A673 (cell line): ENCODE measurements at regions of chr12 and their contacts with region 1.

Region 1: GRCh38 chr12:110826592-110827200 is 20.1 kb upstream of the CCDC63 start:
- DNase-seq: peak; percentile 94
- H3K4me3 ChIP-seq: peak overlapping the region; percentile 8
- H3K27ac ChIP-seq: no peak overlapping the region
- H3K4me1 ChIP-seq: peaks cover 4% of the 10 kb centered on the region
- H3K27me3 ChIP-seq: no peaks in the 10 kb centered on the region
- CTCF ChIP-seq: peak; percentile 98

Region 2: DNA sequence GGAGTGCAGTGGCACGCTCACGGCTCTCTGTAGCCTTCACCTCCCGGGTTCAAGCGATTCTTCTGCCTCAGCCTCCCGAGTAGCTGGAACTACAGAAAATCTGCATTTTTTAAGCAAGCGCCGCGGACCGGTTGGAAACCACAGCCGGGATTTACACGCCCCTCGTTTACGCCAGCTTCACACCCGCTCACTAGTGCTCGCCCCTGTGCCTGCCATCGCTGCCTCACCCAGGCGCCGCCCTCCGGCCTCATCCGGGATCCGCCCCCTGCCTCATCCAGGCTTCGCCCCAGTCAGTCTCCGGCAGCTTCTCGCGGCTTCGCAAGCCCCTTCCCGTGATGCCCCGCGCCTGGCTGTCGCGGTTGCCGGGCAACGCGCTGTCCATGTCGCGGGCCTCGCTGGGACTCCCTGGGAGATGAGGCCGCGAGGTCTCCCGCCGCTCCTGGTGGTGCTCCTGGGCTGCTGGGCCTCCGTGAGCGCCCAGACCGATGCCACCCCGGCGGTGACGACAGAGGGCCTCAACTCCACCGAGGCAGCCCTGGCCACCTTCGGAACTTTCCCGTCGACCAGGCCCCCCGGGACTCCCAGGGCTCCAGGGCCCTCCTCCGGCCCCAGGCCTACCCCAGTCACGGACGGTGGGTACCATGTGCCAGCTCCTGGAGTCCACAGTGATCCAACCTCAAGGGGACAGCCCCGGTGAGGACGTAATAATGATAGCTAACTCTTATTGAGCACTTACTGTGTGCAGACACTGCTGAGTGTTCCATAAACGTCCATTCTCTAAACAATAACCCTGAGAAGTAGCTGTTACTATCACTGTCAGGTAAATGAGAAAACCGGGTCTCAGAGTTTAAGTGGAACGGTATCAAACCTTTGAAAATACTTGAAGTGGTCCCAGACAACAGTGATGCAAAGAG is 212.7 kb before region 1 on chr12 and contains the start of gene TCTN1:
- CTCF ChIA-PET with region 1: no interaction called
- POLR2A ChIA-PET with region 1: no interaction called
- intact Hi-C with region 1: loop called (anchors 5 kb)
- DNase-seq: peak; percentile 98
- H3K4me3 ChIP-seq: peak within 1 kb of the TSS; percentile 73
- H3K27ac ChIP-seq: peak within 1 kb of the TSS; percentile 66
- H3K4me1 ChIP-seq: peaks cover under 1% of the 10 kb centered on the region
- H3K27me3 ChIP-seq: no peaks in the 10 kb centered on the region
- CTCF ChIP-seq: no peak
- total RNA-seq, gene TCTN1: 38.8 TPM in 2 replicates

Region 3: DNA sequence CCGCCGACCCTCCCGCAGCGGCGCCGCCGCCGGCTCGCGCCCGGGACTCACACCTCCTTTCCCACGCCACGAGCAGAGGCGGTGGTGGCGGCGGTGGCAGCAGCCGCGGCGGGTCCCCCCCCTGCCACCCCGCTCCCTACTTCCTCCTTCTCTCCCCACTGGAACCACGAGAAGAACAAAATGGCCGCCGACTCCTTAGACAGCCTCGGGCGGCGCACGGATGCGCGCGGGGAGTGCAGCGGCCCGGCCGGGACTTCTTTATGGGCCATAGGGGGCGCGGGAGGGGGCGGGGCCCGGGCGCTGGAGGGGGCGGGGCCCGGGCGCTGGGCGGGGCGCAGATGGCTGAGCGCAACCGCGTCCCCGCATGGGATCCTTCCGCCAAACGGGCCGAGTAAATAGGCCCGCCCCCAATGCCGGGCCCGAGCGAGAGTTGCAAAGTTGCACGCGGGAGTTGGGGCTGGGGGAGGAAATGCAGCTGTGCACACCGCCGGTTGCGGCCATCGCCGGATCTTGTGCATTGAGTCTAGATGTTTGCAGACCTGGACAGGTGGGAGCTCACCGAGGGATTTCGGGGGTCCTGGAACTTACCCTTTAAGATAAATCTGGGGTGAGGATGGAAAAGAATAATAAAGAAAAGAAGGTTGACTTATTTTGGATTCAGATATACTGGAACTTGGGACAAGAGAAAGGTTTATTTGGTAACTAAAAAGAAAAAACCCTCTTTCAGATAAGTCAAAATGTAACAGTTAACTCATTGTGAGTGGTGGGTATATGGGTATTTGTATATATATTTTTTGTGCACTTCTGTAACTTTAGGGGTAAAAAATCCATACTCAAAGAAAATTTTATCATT is 83.8 kb before region 1 on chr12 and contains the start of gene PPP1CC:
- CTCF ChIA-PET with region 1: interaction called, 3 read pairs
- POLR2A ChIA-PET with region 1: no interaction called
- intact Hi-C with region 1: loop called (anchors 2 kb)
- DNase-seq: peak; percentile 98
- H3K4me3 ChIP-seq: peak within 1 kb of the TSS; percentile 84
- H3K27ac ChIP-seq: peak within 1 kb of the TSS; percentile 93
- H3K4me1 ChIP-seq: peaks cover 33% of the 10 kb centered on the region
- H3K27me3 ChIP-seq: no peaks in the 10 kb centered on the region
- CTCF ChIP-seq: no peak
- total RNA-seq, gene PPP1CC: 268 and 274 TPM in 2 replicates